PC-9 (cell line): ENCODE measurements at regions of chr2 and their contacts with region 1.

Region 1: GRCh38 chr2:221716426-221717303 is 144.6 kb upstream of the EPHA4 start:
- DNase-seq: peak in 1 of 2 experiments; percentile 81
- H3K4me3 ChIP-seq: peak overlapping the region; percentile 2; the same call in 1 of the 2 replicates
- H3K27ac ChIP-seq: peak overlapping the region; percentile 9
- H3K4me1 ChIP-seq: peaks cover 21% of the 10 kb centered on the region
- H3K27me3 ChIP-seq: no peaks in the 10 kb centered on the region
- CTCF ChIP-seq: no peak

Region 2: GRCh38 chr2:221581986-221582385 is 134.7 kb before region 1 on chr2:
- CTCF ChIA-PET with region 1: no interaction called
- POLR2A ChIA-PET with region 1: no interaction called
- intact Hi-C with region 1: loop called (anchors 10 kb)
- DNase-seq: no peak
- H3K4me3 ChIP-seq: no peak overlapping the region
- H3K27ac ChIP-seq: no peak overlapping the region
- H3K4me1 ChIP-seq: no peaks in the 10 kb centered on the region
- H3K27me3 ChIP-seq: no peaks in the 10 kb centered on the region
- CTCF ChIP-seq: no peak

Region 3: GRCh38 chr2:221779614-221780067 is 63.0 kb after region 1 on chr2:
- CTCF ChIA-PET with region 1: no interaction called
- POLR2A ChIA-PET with region 1: no interaction called
- intact Hi-C with region 1: no loop called
- DNase-seq: no peak
- H3K4me3 ChIP-seq: no peak overlapping the region
- H3K27ac ChIP-seq: no peak overlapping the region
- H3K4me1 ChIP-seq: peaks cover 12% of the 10 kb centered on the region
- H3K27me3 ChIP-seq: no peaks in the 10 kb centered on the region
- CTCF ChIP-seq: no peak